Activated naive CD8-positive, alpha-beta T cell treated with anti-CD3 and anti-CD28 coated beads, Interleukin-2, amount 10 ng/mL, durations not matched to agents 7 days and 5 days (primary cell): ENCODE measurements at regions of chr11 and their contacts with region 1.

Region 1: DNA sequence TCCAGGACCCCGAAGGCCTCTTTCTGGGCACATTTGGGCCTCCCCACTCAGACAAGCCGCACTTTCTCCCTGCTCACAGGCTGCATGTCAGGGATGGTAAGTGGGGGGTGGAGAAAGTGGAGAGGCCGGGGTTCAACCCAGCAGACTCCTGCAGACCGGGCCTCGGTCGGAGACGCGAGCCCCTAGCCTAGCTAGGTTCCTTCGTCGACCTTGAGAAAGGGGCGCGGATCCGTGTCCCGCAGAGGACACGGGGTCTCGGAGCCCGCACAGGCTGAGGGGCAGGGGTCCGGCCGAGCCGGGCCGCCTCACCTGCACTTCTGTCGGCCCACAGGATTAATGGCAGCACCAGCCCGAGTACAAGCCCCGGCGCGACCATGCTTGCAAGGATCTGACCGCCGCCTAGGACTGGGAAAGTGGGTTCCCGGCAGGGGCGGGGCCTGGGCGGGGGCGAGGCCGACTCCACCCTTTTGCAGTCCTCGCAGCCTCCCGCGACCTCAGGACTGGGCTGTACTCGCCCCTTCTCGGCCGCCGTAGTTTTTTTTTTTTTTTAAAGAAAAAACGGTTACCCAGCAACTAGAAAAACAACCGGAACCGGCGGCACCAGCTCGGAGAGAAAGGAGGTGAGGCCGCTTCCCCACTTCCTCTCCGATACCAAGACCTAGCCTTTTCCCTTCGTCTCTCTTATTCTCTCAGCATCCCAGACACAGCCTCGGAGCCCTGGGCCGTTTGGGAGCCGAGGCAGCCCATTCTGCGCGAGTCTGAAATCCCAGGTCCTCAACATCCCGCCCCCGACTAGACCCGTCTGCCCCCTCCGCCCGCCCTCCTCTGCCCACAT is at the starts of genes SIAE and SPA17:
- DNase-seq: peak; percentile 89
- ATAC-seq: peak; percentile 90
- H3K4me3 Mint-ChIP-seq: peak within 1 kb of the TSS; percentile 92
- H3K27ac Mint-ChIP-seq: peak within 1 kb of the TSS; percentile 84
- H3K4me1 Mint-ChIP-seq: peaks cover 26% of the 10 kb centered on the region
- H3K27me3 Mint-ChIP-seq: no peaks in the 10 kb centered on the region
- total RNA-seq, gene SIAE: 4.4 to 5.2 TPM
- total RNA-seq, gene SPA17: 1.5 to 3.0 TPM

Region 2: GRCh38 chr11:124724979-124725718 is 51.6 kb after region 1 on chr11:
- POLR2A ChIA-PET with region 1: no interaction called
- DNase-seq: no peak
- ATAC-seq: no peak
- H3K4me3 Mint-ChIP-seq: no peak overlapping the region
- H3K27ac Mint-ChIP-seq: no peak overlapping the region
- H3K4me1 Mint-ChIP-seq: peaks cover 10% of the 10 kb centered on the region
- H3K27me3 Mint-ChIP-seq: peaks cover 41% of the 10 kb centered on the region

Region 3: GRCh38 chr11:124739479-124740276 is 66.1 kb after region 1 on chr11 and contains the start of gene NRGN:
- POLR2A ChIA-PET with region 1: interaction called, 11 read pairs
- DNase-seq: peak; percentile 86
- ATAC-seq: peak; percentile 96
- H3K4me3 Mint-ChIP-seq: peak within 1 kb of the TSS; percentile 70
- H3K27ac Mint-ChIP-seq: peak within 1 kb of the TSS; percentile 8
- H3K4me1 Mint-ChIP-seq: peaks cover 20% of the 10 kb centered on the region
- H3K27me3 Mint-ChIP-seq: peaks cover 43% of the 10 kb centered on the region
- total RNA-seq, gene NRGN: 4.0 to 5.3 TPM

Region 4: GRCh38 chr11:124746621-124747243 is 73.2 kb after region 1 on chr11:
- POLR2A ChIA-PET with region 1: interaction called, 19 read pairs
- DNase-seq: peak; percentile 80
- ATAC-seq: peak; percentile 90
- H3K4me3 Mint-ChIP-seq: peak overlapping the region; percentile 96
- H3K27ac Mint-ChIP-seq: peak overlapping the region; percentile 97
- H3K4me1 Mint-ChIP-seq: peaks cover 20% of the 10 kb centered on the region
- H3K27me3 Mint-ChIP-seq: peaks cover 6% of the 10 kb centered on the region

Region 5: DNA sequence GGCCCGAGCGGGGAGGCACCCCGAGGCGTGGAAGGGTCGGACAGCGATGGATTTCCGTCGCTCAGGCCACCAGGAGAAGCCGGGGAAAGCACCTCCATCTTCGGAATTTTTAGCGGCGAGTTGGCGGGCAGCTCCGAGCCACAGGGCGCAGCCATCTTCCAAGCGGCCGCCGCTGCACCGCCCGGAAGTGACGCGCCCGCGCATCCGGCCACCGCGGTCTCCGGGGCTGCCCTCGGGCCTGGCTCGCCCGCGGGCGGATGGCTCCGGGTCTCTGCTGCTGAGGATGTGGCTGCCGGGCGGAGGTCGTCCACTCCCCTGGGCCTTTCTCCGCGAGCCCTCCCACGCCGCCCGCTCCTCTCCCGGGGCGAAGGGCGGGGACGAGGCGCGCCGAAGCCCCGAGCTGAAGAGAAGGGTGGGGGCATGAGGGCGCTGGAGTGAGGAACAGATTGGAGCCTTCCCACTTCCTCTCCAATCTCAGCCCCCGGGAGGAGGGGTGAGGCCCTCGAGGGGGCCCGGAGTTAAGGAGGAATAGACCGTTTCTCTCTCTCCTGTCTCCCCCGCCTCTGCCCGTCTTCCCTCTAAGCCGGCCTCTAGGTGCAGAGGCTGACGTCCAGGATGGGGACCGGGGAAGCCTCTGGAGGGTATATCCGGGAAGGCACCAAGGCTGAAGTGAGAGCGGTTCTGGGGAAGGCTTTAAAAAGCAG is 126.8 kb after region 1 on chr11 and contains the start of gene MSANTD2:
- POLR2A ChIA-PET with region 1: interaction called, 10 read pairs
- DNase-seq: peak; percentile 93
- ATAC-seq: peak; percentile 91
- H3K4me3 Mint-ChIP-seq: peak within 1 kb of the TSS; percentile 94
- H3K27ac Mint-ChIP-seq: peak within 1 kb of the TSS; percentile 90
- H3K4me1 Mint-ChIP-seq: peaks cover 18% of the 10 kb centered on the region
- H3K27me3 Mint-ChIP-seq: peaks cover 6% of the 10 kb centered on the region
- total RNA-seq, gene MSANTD2: 13.1 to 13.5 TPM